Left cardiac atrium (tissue), 4 donors: ENCODE measurements at regions of chr9 and their contacts with region 1.

Region 1: GRCh38 chr9:26892251-26893029 is at the start of gene CAAP1:
- DNase-seq: peak; percentile 98
- ATAC-seq: peak; percentile 99
- total RNA-seq, gene CAAP1: 7.4 to 12.0 TPM

Region 2: DNA sequence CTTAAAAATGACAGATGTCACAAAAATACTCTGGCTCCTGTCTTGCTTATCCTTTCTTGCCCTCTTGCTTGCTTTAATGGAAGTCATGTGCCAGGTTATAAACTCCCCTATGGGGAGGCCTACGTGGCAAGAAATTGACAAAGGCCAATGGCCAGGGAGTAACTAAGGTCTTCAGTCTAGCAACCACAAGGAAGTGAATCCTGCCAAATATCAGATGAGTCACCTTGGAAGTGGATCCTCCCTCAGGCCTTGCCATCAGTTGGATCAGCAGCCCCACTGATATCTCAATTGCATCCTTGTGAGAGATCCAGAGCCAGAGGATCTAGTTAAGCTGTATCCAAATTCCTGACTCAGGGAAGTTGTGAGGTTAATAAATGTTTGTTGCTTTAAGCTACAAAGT is 82.6 kb before region 1 on chr9:
- intact Hi-C with region 1: no loop called
- DNase-seq: no peak
- ATAC-seq: no peak

Region 3: DNA sequence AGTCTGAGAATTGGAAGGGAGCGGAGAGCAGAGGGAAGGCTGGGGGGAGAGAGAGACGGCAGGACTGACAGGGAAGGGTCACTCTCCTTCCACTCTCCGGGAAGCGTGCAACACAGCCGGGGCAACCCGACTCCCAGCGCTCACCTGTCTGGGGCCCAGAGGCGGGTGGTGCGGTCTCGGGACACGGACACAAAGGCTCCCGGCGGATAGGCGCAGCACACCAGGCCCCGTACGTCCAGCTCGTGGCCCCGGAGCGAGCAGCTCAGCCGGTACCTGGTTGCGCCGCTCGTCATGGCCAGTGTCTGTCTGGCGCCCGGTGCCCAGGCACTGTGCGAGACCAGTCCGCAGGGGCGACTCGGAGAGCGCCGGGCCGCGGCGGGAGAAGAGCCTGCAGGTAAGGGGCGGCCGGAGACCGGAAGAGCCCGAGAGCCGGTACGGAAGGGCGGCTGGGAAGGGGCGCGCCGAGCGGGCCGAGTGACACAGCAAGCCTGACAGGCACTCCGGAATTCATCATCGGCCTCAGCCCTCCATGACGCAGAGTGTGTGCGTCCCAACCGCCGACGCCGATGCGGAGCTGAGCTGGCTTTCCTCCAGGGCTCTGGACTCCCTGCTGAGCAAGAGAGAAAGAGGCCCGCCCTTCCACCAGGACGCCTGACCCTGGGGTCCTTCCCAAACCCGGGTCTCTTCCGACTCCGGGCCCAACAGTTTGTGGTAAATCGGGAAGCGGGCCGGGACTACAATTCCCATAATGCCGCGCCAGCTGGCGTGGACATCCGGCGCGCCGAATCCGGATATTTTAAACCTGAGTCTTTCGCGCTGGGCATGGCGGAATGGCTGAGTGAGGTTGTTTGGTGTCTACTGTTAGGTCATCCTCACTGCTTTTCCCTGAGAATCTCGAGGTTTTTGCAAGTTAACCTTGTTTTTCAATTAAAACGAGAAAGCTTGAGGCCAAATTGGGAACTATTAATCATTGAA is 54.6 kb after region 1 on chr9 and contains the start of gene PLAA:
- intact Hi-C with region 1: loop called in 1 of 2 experiments (anchors 10 kb)
- DNase-seq: peak; percentile 94
- ATAC-seq: peak; percentile 100
- total RNA-seq, gene PLAA: 25.7 to 26.6 TPM

Region 4: GRCh38 chr9:26955921-26956859 is 63.8 kb after region 1 on chr9 and contains the start of gene IFT74:
- intact Hi-C with region 1: loop called in 1 of 2 experiments (anchors 5 kb)
- DNase-seq: peak; percentile 99
- ATAC-seq: peak; percentile 100
- total RNA-seq, gene IFT74: 7.8 to 11.4 TPM